ENCODE measurements at regions of chr7 and their contacts with region 1.

Region 1: DNA sequence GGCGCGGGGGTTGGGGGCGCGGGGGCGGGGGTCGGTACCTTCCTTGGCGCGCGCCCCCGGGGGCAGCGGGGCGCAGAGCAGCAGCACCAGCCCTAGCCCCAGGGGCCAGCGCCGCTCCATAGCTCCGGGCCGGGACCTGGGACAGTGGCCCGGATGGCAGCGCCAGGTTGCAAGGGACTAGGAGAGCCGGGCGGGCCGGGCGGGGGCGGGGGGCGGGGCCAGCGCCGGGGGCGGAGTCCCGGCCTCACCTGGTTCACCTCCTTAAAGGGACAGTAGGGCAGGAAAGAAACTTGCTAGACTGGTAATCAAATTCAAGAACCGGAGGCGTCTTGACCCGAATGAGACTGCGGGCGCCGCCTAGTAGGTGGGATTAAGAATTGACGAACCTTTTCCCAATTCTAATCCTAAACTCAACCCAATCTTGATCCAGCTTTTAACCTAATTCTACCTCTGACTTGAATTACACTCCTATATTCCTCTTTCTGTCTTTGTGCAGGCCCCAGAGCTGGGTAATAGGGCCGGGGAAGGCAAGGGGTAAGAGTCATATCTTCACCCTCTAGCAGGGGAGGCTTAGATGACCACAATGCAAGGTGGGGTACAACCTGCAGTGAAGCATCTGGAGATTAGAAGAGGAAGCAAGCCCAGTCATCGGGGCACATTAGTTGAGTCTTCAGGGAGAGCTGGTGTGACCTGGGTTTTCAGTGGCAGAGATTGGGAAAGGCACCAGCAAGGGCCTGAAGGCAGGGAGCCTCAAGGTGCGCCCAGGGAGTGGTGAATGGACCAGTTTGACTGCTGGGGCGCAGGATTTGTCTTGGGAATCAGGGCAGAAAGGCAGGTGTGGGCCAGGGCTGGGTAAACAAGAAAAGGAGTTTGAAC is at the start of gene EPHA1:
- DNase-seq: peak; percentile 30 to 85 (median 50)
- ATAC-seq: peak; percentile 74
- H3K4me3 ChIP-seq: peak within 1 kb of the TSS; percentile 71
- H3K4me3 Mint-ChIP-seq: peak within 1 kb of the TSS; percentile 94
- H3K27ac ChIP-seq: peak within 1 kb of the TSS; percentile 13 to 38
- H3K27ac Mint-ChIP-seq: peak within 1 kb of the TSS; percentile 85
- H3K4me1 ChIP-seq: peaks cover 55% of the 10 kb centered on the region
- H3K4me1 Mint-ChIP-seq: peaks cover 87% of the 10 kb centered on the region
- H3K27me3 ChIP-seq: no peaks in the 10 kb centered on the region
- H3K27me3 Mint-ChIP-seq: no peaks in the 10 kb centered on the region
- CTCF ChIP-seq: peak; percentile 59
- total RNA-seq, gene EPHA1: 16.0 to 19.0 TPM

Region 2: DNA sequence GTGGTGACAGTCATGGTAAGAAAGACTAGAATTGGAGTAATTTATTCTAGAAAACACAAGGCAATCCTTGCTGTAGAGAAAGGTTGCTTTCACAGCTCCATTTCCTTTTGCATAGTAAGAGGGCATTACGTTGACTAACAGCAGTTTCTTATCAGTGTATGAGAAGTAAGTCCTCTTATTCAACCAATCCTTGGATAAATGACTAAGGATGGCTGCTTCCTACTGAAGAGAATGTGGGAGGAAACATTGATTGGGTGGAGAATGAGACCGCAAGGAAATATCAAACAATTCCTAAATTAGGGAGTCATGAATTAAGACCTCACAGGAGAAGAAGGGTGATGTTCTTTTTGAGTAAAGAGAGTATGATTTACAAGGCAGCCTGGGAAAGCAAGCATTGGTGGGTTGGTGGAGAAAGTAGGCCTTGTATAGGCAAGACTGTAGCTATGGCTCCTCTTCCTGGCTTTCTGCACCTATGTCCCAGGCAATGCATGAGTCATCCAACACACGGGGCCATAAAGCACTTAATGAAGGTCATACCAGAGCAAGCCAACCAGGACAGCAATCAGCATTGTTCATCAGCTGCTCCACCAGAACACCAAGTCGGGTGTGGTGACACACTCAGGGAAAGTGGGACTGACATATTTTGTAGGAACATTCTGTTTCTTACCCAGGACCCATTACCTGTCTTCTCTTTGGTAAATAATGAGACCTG is 1407.6 kb before region 1 on chr7:
- CTCF ChIA-PET with region 1: no interaction called
- POLR2A ChIA-PET with region 1: no interaction called
- intact Hi-C with region 1: no loop called
- DNase-seq: no peak
- ATAC-seq: no peak
- H3K4me3 ChIP-seq: no peak overlapping the region
- H3K4me3 Mint-ChIP-seq: no peak overlapping the region
- H3K27ac ChIP-seq: no peak overlapping the region
- H3K27ac Mint-ChIP-seq: no peak overlapping the region
- H3K4me1 ChIP-seq: no peaks in the 10 kb centered on the region
- H3K4me1 Mint-ChIP-seq: no peaks in the 10 kb centered on the region
- H3K27me3 ChIP-seq: peaks cover 0 to 4% of the 10 kb centered on the region in 2 experiments
- H3K27me3 Mint-ChIP-seq: peaks cover 17% of the 10 kb centered on the region
- CTCF ChIP-seq: no peak

Region 3: GRCh38 chr7:142357953-142358520 is 1050.9 kb before region 1 on chr7:
- CTCF ChIA-PET with region 1: no interaction called
- POLR2A ChIA-PET with region 1: no interaction called
- intact Hi-C with region 1: no loop called
- DNase-seq: peak in 5 of 14 experiments; percentile 11 to 73 (median 58)
- ATAC-seq: peak; percentile 57
- H3K4me3 ChIP-seq: no peak overlapping the region
- H3K4me3 Mint-ChIP-seq: no peak overlapping the region
- H3K27ac ChIP-seq: no peak overlapping the region
- H3K27ac Mint-ChIP-seq: no peak overlapping the region
- H3K4me1 ChIP-seq: peaks cover 32% of the 10 kb centered on the region
- H3K4me1 Mint-ChIP-seq: peaks cover 55% of the 10 kb centered on the region
- H3K27me3 ChIP-seq: no peaks in the 10 kb centered on the region
- H3K27me3 Mint-ChIP-seq: peaks cover 4% of the 10 kb centered on the region
- CTCF ChIP-seq: peak; percentile 75

Region 4: GRCh38 chr7:142714375-142714774 is 694.5 kb before region 1 on chr7:
- CTCF ChIA-PET with region 1: no interaction called
- POLR2A ChIA-PET with region 1: no interaction called
- intact Hi-C with region 1: no loop called
- DNase-seq: peak in 12 of 14 experiments; percentile 5 to 76 (median 37)
- ATAC-seq: peak; percentile 79
- H3K4me3 ChIP-seq: peak overlapping the region; percentile 54
- H3K4me3 Mint-ChIP-seq: peak overlapping the region; percentile 23
- H3K27ac ChIP-seq: no peak overlapping the region
- H3K27ac Mint-ChIP-seq: peak overlapping the region; percentile 80
- H3K4me1 ChIP-seq: peaks cover 53% of the 10 kb centered on the region
- H3K4me1 Mint-ChIP-seq: peaks cover 79% of the 10 kb centered on the region
- H3K27me3 ChIP-seq: no peaks in the 10 kb centered on the region
- H3K27me3 Mint-ChIP-seq: no peaks in the 10 kb centered on the region
- CTCF ChIP-seq: no peak

Region 5: GRCh38 chr7:143248761-143249354 is 160.1 kb before region 1 on chr7:
- CTCF ChIA-PET with region 1: no interaction called
- POLR2A ChIA-PET with region 1: no interaction called
- intact Hi-C with region 1: loop called in 1 of 2 experiments (anchors 5 kb)
- DNase-seq: no peak
- ATAC-seq: no peak
- H3K4me3 ChIP-seq: no peak overlapping the region
- H3K4me3 Mint-ChIP-seq: peak overlapping the region; percentile 23
- H3K27ac ChIP-seq: peak overlapping the region in 1 of 2 donors; percentile 10
- H3K27ac Mint-ChIP-seq: no peak overlapping the region
- H3K4me1 ChIP-seq: peaks cover 54% of the 10 kb centered on the region
- H3K4me1 Mint-ChIP-seq: peaks cover 97% of the 10 kb centered on the region
- H3K27me3 ChIP-seq: no peaks in the 10 kb centered on the region
- H3K27me3 Mint-ChIP-seq: no peaks in the 10 kb centered on the region
- CTCF ChIP-seq: no peak

Region 6: DNA sequence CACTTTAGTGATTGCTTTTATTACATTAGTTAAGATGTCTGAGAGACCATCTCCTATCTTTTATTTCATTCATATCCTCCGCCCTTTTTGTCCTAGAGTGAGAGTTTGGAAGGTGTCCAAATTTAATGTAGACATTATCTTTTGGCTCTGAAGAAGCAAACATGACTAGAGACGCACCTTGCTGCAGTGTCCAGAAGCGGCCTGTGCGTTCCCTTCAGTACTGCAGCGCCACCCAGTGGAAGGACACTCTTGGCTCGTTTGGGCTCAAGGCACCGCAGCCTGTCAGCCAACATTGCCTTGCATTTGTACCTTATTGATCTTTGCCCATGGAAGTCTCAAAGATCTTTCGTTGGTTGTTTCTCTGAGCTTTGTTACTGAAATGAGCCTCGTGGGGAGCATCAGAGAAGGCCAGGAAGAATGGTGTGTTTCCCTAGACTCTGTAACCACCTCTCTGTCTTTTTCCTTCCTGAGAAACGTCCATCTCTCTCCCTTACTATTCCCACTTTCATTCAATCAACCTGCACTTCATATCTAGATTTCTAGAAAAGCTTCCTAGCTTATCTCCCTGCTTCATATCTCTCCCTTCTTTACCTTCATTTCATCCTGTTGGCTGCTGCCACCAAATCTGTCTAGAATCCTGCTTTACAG is 103.4 kb before region 1 on chr7:
- CTCF ChIA-PET with region 1: no interaction called
- POLR2A ChIA-PET with region 1: no interaction called
- intact Hi-C with region 1: loop called in 1 of 2 experiments (anchors 5 kb)
- DNase-seq: peak; percentile 53 to 81 (median 65)
- ATAC-seq: peak; percentile 74
- H3K4me3 ChIP-seq: no peak overlapping the region
- H3K4me3 Mint-ChIP-seq: no peak overlapping the region
- H3K27ac ChIP-seq: no peak overlapping the region
- H3K27ac Mint-ChIP-seq: peak overlapping the region; percentile 5
- H3K4me1 ChIP-seq: peaks cover 17% of the 10 kb centered on the region
- H3K4me1 Mint-ChIP-seq: peaks cover 25% of the 10 kb centered on the region
- H3K27me3 ChIP-seq: no peaks in the 10 kb centered on the region
- H3K27me3 Mint-ChIP-seq: no peaks in the 10 kb centered on the region
- CTCF ChIP-seq: peak; percentile 64

Region 7: DNA sequence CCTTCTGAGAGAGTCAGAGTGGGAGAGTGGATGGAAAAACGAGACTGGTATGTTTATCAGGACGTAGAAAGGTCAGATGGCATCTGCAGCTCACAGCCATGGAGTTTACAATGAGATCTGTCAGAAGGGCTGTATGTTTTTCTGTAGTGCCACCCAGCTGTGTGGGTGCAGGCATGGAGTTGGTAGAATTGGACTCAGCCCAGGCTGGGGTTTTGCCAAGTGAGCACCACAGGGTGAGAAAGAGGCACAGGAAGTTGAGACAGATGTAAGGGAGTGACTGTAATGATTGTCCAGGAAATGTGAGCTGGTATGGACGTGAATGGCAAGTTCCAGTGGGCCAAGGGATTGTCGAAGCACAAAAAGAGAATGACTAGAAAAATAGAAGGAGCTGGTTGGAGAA is 36.9 kb before region 1 on chr7:
- CTCF ChIA-PET with region 1: no interaction called
- POLR2A ChIA-PET with region 1: interaction called, 26 read pairs
- intact Hi-C with region 1: no loop called
- DNase-seq: peak; percentile 33 to 82 (median 62)
- ATAC-seq: peak; percentile 45
- H3K4me3 ChIP-seq: no peak overlapping the region
- H3K4me3 Mint-ChIP-seq: peak overlapping the region; percentile 2
- H3K27ac ChIP-seq: no peak overlapping the region
- H3K27ac Mint-ChIP-seq: peak overlapping the region; percentile 24
- H3K4me1 ChIP-seq: peaks cover 52% of the 10 kb centered on the region
- H3K4me1 Mint-ChIP-seq: peaks cover 57% of the 10 kb centered on the region
- H3K27me3 ChIP-seq: no peaks in the 10 kb centered on the region
- H3K27me3 Mint-ChIP-seq: no peaks in the 10 kb centered on the region
- CTCF ChIP-seq: no peak

Region 8: GRCh38 chr7:143385891-143386781 is 22.8 kb before region 1 on chr7:
- CTCF ChIA-PET with region 1: interaction called, 16 read pairs
- POLR2A ChIA-PET with region 1: interaction called, 31 read pairs
- intact Hi-C with region 1: loop called (anchors 2 kb)
- DNase-seq: peak in 7 of 14 experiments; percentile 34 to 77 (median 60)
- ATAC-seq: peak; percentile 67
- H3K4me3 ChIP-seq: peak overlapping the region; percentile 40
- H3K4me3 Mint-ChIP-seq: no peak overlapping the region
- H3K27ac ChIP-seq: peak overlapping the region; percentile 47 to 68
- H3K27ac Mint-ChIP-seq: no peak overlapping the region
- H3K4me1 ChIP-seq: peaks cover 70% of the 10 kb centered on the region
- H3K4me1 Mint-ChIP-seq: peaks cover 10% of the 10 kb centered on the region
- H3K27me3 ChIP-seq: no peaks in the 10 kb centered on the region
- H3K27me3 Mint-ChIP-seq: no peaks in the 10 kb centered on the region
- CTCF ChIP-seq: no peak

Measured in CD4-positive, alpha-beta T cell (primary cell).